Heart left ventricle (tissue), 16 donors: ENCODE measurements at regions of chr18 and their contacts with region 1.

Region 1: GRCh38 chr18:52963481-52963880 is 623.5 kb downstream of the DCC start:
- DNase-seq: no peak
- ATAC-seq: no peak
- H3K4me3 ChIP-seq: no peak overlapping the region
- H3K27ac ChIP-seq: no peak overlapping the region
- H3K4me1 ChIP-seq: no peaks in the 10 kb centered on the region
- H3K27me3 ChIP-seq: no peaks in the 10 kb centered on the region
- CTCF ChIP-seq: no peak
- POLR2A ChIP-seq: no peak

Region 2: DNA sequence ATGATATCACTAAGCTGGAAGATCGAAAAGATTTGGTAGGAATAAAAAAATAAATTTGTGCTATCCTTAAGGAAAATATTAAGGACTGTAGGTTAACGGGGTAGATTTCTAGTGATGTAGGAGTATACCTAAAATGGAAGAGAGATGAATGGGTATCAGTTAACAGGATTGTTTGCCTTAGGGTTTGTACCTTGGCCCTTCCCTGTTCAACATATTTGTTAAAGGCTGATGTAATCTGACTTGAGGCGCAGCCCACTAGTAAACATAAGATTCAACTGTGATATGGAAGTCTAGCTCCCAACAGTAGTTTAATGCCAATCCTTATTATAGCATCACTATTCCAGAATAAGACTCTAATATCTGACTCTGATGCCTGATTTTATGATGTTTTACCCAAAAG is 61.8 kb after region 1 on chr18:
- intact Hi-C with region 1: loop called in 1 of 10 experiments (anchors 10 kb)
- DNase-seq: no peak
- ATAC-seq: no peak
- H3K4me3 ChIP-seq: no peak overlapping the region
- H3K27ac ChIP-seq: no peak overlapping the region
- H3K4me1 ChIP-seq: no peaks in the 10 kb centered on the region
- H3K27me3 ChIP-seq: no peaks in the 10 kb centered on the region
- CTCF ChIP-seq: no peak
- POLR2A ChIP-seq: no peak